ENCODE measurements at regions of chr2 and their contacts with region 1.

Region 1: GRCh38 chr2:98608116-98608999 is at the starts of genes COA5 and UNC50:
- DNase-seq: peak; percentile 92
- ATAC-seq: peak; percentile 96 to 99 (median 98)
- H3K4me3 ChIP-seq: peak within 1 kb of the TSS; percentile 62 to 99 (median 94)
- H3K27ac ChIP-seq: peak within 1 kb of the TSS; percentile 84 to 100 (median 96)
- H3K4me1 ChIP-seq: peaks cover 16 to 65% (median 54%) of the 10 kb centered on the region in 9 donors
- H3K27me3 ChIP-seq: no peaks in the 10 kb centered on the region
- CTCF ChIP-seq: peak in 3 of 9 donors; percentile 2 to 18 (median 9)
- total RNA-seq, gene COA5: 20.2 to 33.8 (median 26.0) TPM
- total RNA-seq, gene UNC50: 21.3 to 34.2 (median 25.3) TPM

Region 2: GRCh38 chr2:98568881-98569793 is 39.2 kb before region 1 on chr2:
- intact Hi-C with region 1: loop called in 1 of 10 experiments (anchors 5 kb)
- DNase-seq: peak in 1 of 2 donors; percentile 56
- ATAC-seq: peak in 5 of 8 donors; percentile 13 to 50 (median 33)
- H3K4me3 ChIP-seq: no peak overlapping the region
- H3K27ac ChIP-seq: no peak overlapping the region
- H3K4me1 ChIP-seq: peaks cover 0 to 29% (median 21%) of the 10 kb centered on the region in 9 donors
- H3K27me3 ChIP-seq: no peaks in the 10 kb centered on the region
- CTCF ChIP-seq: peak; percentile 36 to 88 (median 82)